GM18951 (cell line): ENCODE measurements at regions of chr2 and their contacts with region 1.

Region 1: GRCh38 chr2:132547074-132547687 is 122.8 kb downstream of the LYPD1 start:
- POLR2A ChIP-seq: no peak

Region 2: DNA sequence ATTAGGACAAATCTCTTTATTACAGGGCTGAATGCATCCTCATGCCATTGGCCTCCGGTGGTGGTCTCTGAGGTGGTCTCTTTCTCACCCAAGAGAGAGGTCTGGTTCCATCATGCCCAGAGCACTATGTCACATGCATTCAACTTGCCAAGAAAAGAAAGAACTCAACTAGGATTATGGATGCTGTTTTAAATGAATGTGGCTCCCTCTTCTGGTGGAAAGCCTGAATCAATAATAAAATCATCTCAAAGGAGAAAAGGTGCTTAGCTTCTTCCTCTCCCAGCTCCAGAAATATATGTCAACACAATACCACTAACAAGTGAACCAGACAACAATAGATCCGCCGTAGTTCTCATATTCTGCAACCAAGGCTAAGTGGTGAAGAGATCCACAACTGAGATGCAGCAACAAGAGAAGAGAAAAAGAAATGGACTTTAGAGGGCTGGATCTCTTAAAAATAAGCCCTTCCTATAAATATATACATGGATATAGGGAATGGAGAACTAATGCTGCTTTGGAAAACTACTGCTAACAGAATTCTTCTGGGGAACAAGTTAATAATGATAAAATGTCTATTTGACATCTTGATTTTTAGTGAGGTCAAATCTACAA is 624.3 kb after region 1 on chr2:
- in situ Hi-C with region 1: loop called (anchors 25 kb)
- POLR2A ChIP-seq: no peak

Region 3: GRCh38 chr2:133561045-133561852 is 1014.1 kb after region 1 on chr2:
- in situ Hi-C with region 1: loop called (anchors 25 kb)
- POLR2A ChIP-seq: no peak

Region 4: DNA sequence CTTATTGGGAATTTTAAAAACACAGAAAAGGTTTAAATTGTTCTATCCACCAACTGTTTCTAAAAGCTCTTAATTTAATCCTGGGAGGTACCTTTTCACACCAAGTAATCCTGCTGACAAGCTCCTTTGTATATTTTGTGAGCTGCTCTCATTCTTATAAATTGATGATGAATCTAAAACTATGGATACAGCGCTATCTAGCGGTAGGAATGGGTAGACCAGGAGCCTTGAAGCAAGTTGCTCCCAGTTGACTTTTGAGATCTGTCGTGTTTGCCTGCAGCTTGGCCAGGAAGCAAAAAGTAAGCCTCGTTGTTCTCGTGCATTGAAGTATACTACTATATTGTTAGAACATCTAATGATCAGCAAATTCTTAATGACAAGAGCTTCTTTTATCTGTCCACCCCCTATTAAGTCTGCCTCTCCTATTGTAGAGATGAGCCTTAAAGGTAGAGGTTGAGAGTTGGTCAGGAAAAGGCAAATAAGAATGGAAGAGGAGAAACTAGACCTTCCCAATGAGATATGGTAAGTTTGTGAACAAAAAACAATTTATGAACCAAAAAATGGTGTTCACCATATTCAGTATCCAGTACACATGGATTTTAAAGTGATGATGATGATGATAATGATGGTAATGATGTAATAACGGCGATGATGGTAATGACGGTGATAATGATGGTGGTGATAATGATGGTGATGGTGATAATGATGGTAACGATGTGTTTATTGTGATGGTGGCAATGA is 1233.1 kb after region 1 on chr2:
- in situ Hi-C with region 1: loop called (anchors 25 kb)
- POLR2A ChIP-seq: no peak